ENCODE measurements at regions of chr6 and their contacts with region 1.

Region 1: DNA sequence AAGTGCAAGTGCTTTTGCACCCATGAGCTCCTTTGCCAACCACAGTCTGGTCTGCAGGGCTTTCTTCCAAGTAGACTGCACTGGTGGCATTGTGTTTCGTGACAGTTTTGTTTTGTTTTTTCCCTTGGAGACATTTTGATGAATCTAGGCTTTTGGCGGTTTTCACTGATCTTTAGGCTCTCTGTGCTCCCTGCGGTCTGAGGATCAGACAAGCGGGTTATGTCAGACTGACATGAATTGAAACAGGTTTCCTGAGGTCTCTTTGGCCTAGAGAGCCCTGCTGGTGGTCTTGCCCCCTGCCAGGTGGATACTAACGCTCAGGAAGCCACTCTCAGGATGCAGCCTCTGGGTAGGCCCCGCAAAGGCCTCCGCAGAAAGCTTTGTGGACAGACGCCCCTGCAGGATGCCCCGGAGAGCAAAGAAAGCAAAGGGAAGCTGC is 555.4 kb upstream of the AGPAT4 start:
- DNase-seq: no peak
- ATAC-seq: no peak
- H3K4me3 ChIP-seq: no peak overlapping the region
- H3K27ac ChIP-seq: no peak overlapping the region
- H3K4me1 ChIP-seq: no peaks in the 10 kb centered on the region
- H3K27me3 ChIP-seq: no peaks in the 10 kb centered on the region
- CTCF ChIP-seq: no peak

Region 2: DNA sequence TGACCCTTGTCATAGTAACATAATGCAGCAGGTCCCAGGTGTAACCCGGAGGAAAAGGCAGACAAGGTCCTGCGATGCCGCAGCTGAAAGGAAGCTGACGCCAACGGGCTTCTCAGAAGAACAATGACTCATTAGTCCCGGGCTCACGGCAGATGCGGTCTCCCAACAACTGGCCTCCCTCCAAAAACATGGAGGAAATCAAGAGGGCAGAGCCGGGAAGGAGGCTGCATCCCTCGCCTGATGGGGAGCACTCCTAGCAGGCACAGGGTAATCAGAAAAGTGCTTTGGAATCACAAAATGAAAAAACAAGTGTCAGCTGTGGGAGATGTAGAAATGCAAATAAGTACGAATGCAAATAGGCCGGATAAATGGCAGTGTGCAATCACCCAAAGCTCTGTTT is 390.2 kb before region 1 on chr6:
- CTCF ChIA-PET with region 1: no interaction called
- POLR2A ChIA-PET with region 1: interaction called, 13 read pairs
- in situ Hi-C with region 1: no loop called
- intact Hi-C with region 1: no loop called
- DNase-seq: peak; percentile 65
- ATAC-seq: peak; percentile 83
- H3K4me3 ChIP-seq: peak overlapping the region; percentile 26 to 53
- H3K27ac ChIP-seq: peak overlapping the region; percentile 66
- H3K4me1 ChIP-seq: peaks cover 26% of the 10 kb centered on the region
- H3K27me3 ChIP-seq: no peaks in the 10 kb centered on the region
- CTCF ChIP-seq: no peak

Measured in Panc1 (cell line).